Heart right ventricle (tissue), 16 donors: ENCODE measurements at regions of chr11 and their contacts with region 1.

Region 1: GRCh38 chr11:33257897-33258630 is 883 bp downstream of the HIPK3 start:
- DNase-seq: peak; percentile 91 to 92
- ATAC-seq: peak; percentile 85 to 96 (median 88)
- H3K4me3 ChIP-seq: peak overlapping the region; percentile 57 to 97 (median 93)
- H3K27ac ChIP-seq: peak overlapping the region; percentile 95 to 100 (median 100)
- H3K4me1 ChIP-seq: peaks cover 0 to 50% (median 42%) of the 10 kb centered on the region in 9 donors
- H3K27me3 ChIP-seq: no peaks in the 10 kb centered on the region
- CTCF ChIP-seq: peak in 7 of 9 donors; percentile 16 to 56 (median 44)

Region 2: DNA sequence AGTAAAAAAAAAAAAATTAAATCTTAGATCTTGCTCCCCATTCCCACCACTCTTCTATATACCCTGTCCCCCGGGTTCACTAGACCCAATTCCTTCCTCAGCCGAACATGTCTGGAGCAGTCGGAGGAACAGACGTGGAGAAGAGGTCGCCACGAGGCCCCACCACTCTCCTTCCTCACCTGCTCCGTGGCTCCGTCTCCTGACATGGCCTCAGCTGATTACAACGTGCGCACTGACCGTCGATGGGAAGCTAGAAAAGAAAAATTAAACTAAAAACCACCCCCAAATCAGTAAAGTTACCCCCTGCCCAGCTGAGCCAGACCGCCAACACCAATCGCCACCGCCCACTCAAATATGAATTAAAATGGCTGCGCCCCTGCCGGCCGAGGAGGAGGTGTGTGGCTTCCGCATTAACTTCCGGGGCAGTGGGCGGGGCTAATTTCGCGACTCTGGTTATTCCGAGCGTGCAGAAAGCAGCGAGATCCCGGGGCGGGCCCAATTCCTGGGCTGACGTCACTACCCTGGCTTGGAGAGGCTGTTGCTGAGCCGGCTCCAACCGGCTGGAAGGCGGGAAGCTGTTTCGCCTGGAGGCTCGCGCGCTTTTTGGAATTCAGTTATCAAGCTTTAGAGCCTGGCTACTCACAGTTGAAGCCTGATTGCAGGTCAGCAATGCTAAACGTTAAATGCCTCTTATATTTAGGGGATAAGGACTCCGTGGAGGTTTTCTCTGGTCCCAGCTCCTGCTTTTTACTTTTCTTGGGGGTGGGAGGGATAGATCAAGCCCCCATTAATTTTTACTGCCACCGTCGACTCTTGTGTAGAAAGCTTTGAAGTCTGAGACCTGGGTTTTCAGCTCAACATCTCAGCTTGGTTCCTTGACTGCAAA is 96.7 kb before region 1 on chr11 and contains the start of gene CSTF3:
- intact Hi-C with region 1: loop called in 9 of 10 experiments (anchors 2 to 10 kb)
- DNase-seq: peak; percentile 100
- ATAC-seq: peak; percentile 98 to 100 (median 100)
- H3K4me3 ChIP-seq: peak within 1 kb of the TSS; percentile 42 to 83 (median 74)
- H3K27ac ChIP-seq: peak within 1 kb of the TSS in 9 of 10 donors; percentile 34 to 89 (median 78)
- H3K4me1 ChIP-seq: peaks cover 0 to 48% (median 36%) of the 10 kb centered on the region in 9 donors
- H3K27me3 ChIP-seq: no peaks in the 10 kb centered on the region
- CTCF ChIP-seq: peak; percentile 48 to 71 (median 62)
- total RNA-seq, gene CSTF3: 8.6 to 16.0 (median 12.7) TPM

Region 3: GRCh38 chr11:33234397-33235190 is 23.5 kb before region 1 on chr11:
- intact Hi-C with region 1: loop called in 1 of 10 experiments (anchors 2 kb)
- DNase-seq: no peak
- ATAC-seq: peak; percentile 16 to 81 (median 62)
- H3K4me3 ChIP-seq: no peak overlapping the region
- H3K27ac ChIP-seq: peak overlapping the region in 5 of 10 donors; percentile 30 to 61 (median 36)
- H3K4me1 ChIP-seq: peaks cover 0 to 17% (median 9%) of the 10 kb centered on the region in 9 donors
- H3K27me3 ChIP-seq: no peaks in the 10 kb centered on the region
- CTCF ChIP-seq: no peak

Region 4: DNA sequence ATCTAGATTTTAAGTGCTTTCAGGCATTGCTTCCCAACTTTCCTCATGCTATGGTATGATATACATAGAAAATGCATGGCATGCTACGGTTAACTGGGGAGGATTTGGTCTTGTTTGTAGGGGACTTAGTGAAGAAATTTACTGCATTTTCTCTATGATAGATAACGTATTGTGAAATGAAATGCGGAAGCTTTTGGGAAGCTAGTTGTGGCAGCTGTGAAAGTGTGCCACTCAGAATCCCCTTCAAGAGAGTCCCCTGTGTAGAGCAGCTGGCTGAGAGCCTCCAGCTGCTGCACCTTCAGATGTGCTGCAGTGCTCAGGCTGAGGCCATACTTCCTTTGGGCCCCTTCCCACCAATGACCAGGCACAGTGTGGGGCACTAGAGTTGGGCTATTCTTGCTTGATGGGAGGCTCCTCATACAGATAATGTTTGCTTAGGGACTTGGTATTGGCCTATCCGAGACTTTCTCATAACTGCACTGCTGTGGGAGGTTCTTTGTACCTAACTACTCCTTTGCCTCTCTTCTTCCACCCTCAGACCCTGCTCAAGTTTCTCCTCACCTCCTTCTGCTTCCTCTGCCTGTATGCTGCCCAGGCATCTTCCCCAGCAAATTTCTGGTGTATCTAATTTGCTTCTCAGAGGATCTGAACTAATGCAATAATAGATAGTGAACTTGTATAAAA is 66.4 kb after region 1 on chr11:
- intact Hi-C with region 1: loop called in 7 of 10 experiments (anchors 1 to 5 kb)
- DNase-seq: no peak
- ATAC-seq: peak in 6 of 8 donors; percentile 11 to 66 (median 29)
- H3K4me3 ChIP-seq: no peak overlapping the region
- H3K27ac ChIP-seq: peak overlapping the region in 7 of 10 donors; percentile 0 to 37 (median 9)
- H3K4me1 ChIP-seq: peaks cover 2 to 100% (median 95%) of the 10 kb centered on the region in 9 donors
- H3K27me3 ChIP-seq: no peaks in the 10 kb centered on the region
- CTCF ChIP-seq: no peak

Region 5: GRCh38 chr11:33687733-33688479 is 429.8 kb after region 1 on chr11:
- intact Hi-C with region 1: loop called in 3 of 10 experiments (anchors 10 kb)
- DNase-seq: peak in 1 of 2 donors; percentile 70
- ATAC-seq: no peak
- H3K4me3 ChIP-seq: no peak overlapping the region
- H3K27ac ChIP-seq: peak overlapping the region in 2 of 10 donors; percentile 84 to 94
- H3K4me1 ChIP-seq: peaks cover 16 to 52% (median 38%) of the 10 kb centered on the region in 9 donors
- H3K27me3 ChIP-seq: no peaks in the 10 kb centered on the region
- CTCF ChIP-seq: peak; percentile 66 to 85 (median 76)

Region 6: DNA sequence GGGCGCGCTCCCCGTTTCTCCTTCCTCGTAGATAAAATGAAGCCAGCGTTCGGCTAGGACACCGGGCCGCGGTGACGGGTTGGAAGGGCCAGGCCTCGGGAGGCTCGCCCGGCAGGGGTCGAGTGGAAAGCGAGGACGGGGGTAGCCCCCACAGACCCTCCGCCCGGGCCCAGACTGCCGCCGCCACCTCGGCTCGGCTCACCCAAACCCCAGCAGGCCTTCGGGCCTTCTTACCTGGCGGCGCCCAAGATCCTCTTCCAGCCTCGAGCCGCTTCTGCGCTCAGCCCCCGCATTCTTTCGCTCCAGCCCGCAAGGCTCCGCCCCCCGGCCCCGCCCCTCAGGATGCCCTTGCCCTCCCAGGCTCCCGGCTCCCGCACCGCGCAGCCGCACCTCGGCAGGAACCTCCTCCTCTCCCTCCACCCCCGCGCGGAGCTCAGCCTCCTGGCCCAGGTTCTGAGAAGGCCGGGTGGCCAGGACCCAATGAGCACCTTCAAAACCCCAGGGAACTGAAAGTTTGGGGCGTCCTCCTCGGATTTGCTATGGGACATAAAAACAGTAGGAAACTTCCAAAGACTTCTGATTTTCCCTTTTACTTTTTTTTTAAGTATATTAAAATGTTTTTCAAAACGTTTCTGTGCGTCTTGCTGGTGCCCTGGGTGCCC is 478.2 kb after region 1 on chr11 and contains the start of gene CD59:
- intact Hi-C with region 1: loop called in 1 of 10 experiments (anchors 10 kb)
- DNase-seq: peak; percentile 98
- ATAC-seq: peak; percentile 96 to 97 (median 96)
- H3K4me3 ChIP-seq: peak within 1 kb of the TSS; percentile 66 to 100 (median 84)
- H3K27ac ChIP-seq: peak within 1 kb of the TSS; percentile 94 to 100 (median 96)
- H3K4me1 ChIP-seq: peaks cover 9 to 52% (median 45%) of the 10 kb centered on the region in 9 donors
- H3K27me3 ChIP-seq: no peaks in the 10 kb centered on the region
- CTCF ChIP-seq: no peak
- total RNA-seq, gene CD59: 676 to 1,261 (median 764) TPM